ENCODE measurements at regions of chr9 and their contacts with region 1.

Region 1: GRCh38 chr9:126704873-126705766 is 91.4 kb downstream of the LMX1B start:
- DNase-seq: no peak
- ATAC-seq: peak; percentile 85
- H3K4me3 ChIP-seq: no peak overlapping the region
- H3K27ac ChIP-seq: no peak overlapping the region
- H3K4me1 ChIP-seq: no peaks in the 10 kb centered on the region
- H3K27me3 ChIP-seq: peaks cover 0 to 2% of the 10 kb centered on the region in 2 experiments; a peak in 2 of 4 replicates
- CTCF ChIP-seq: peak; percentile 82 to 91 (median 87)
- EP300 ChIP-seq: no peak
- POLR2A ChIP-seq: no peak
- RAD21 ChIP-seq: peak; percentile 81

Region 2: GRCh38 chr9:126599047-126599650 is 106.0 kb before region 1 on chr9:
- CTCF ChIA-PET with region 1: no interaction called
- POLR2A ChIA-PET with region 1: no interaction called
- RAD21 ChIA-PET with region 1: no interaction called
- SMC1A ChIA-PET with region 1: no interaction called
- in situ Hi-C with region 1: no loop called
- intact Hi-C with region 1: no loop called
- DNase-seq: no peak
- ATAC-seq: no peak
- H3K4me3 ChIP-seq: no peak overlapping the region
- H3K27ac ChIP-seq: no peak overlapping the region
- H3K4me1 ChIP-seq: no peaks in the 10 kb centered on the region
- H3K27me3 ChIP-seq: no peaks in the 10 kb centered on the region; a peak in 1 of 4 replicates
- CTCF ChIP-seq: no peak
- EP300 ChIP-seq: no peak
- POLR2A ChIP-seq: no peak
- RAD21 ChIP-seq: no peak

Region 3: GRCh38 chr9:126719618-126720031 is 14.5 kb after region 1 on chr9:
- CTCF ChIA-PET with region 1: interaction called, 41 read pairs
- POLR2A ChIA-PET with region 1: interaction called, 3 read pairs
- RAD21 ChIA-PET with region 1: interaction called, 24 read pairs
- SMC1A ChIA-PET with region 1: interaction called, 8 read pairs
- in situ Hi-C with region 1: no loop called
- intact Hi-C with region 1: no loop called
- DNase-seq: peak; percentile 53
- ATAC-seq: peak; percentile 44
- H3K4me3 ChIP-seq: no peak overlapping the region
- H3K27ac ChIP-seq: no peak overlapping the region; the same call in 1 of the 2 replicates
- H3K4me1 ChIP-seq: peaks cover 17% of the 10 kb centered on the region
- H3K27me3 ChIP-seq: no peaks in the 10 kb centered on the region
- CTCF ChIP-seq: no peak
- EP300 ChIP-seq: no peak
- POLR2A ChIP-seq: 0 out of 2 replicates have a peak, but pooled peaks have one; percentile 22
- RAD21 ChIP-seq: no peak

Region 4: DNA sequence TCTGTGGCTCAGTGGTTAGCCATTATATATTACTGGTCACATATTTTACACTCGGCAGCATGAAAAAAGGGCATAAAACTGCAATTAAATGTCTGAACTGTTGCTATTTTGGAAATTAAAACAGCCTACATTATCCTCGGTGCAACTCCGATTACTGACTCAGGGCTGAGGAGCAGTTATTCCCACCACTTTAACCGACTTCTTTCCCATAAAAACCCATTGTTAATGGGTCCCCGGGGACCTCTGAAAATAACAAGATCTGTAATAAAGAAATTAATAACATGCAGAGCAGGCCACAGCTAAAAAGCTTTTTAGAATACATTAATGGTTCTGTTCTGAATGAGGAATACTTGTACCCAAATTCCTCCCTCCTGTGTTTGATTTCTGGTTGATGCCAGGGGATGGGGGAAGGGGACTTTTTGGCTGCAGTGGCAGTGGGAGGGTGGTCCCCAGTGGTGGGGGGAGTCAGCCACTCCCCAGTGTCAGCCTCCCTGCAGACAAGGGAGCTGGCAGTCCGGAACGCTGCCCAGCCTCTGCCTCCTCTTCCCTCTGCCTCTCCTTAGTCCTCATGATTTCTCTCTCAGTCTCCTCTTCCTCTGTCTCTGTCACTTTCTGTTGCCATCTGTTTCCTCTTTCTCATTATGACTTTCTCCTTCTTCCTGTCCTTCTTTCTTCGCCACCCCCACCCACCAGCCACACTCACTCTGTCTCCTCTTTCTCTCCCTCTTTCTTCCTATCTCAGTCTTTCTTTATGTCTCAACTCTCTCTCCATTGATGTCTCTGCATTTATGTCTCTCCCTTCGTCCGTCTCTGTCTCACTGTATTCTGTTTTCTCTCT is 40.7 kb after region 1 on chr9:
- CTCF ChIA-PET with region 1: interaction called, 14 read pairs
- POLR2A ChIA-PET with region 1: no interaction called
- RAD21 ChIA-PET with region 1: interaction called, 9 read pairs
- SMC1A ChIA-PET with region 1: interaction called, 3 read pairs
- in situ Hi-C with region 1: no loop called
- intact Hi-C with region 1: no loop called
- DNase-seq: no peak
- ATAC-seq: peak; percentile 50
- H3K4me3 ChIP-seq: no peak overlapping the region
- H3K27ac ChIP-seq: no peak overlapping the region
- H3K4me1 ChIP-seq: peaks cover 2% of the 10 kb centered on the region; the same call in 1 of the 2 replicates
- H3K27me3 ChIP-seq: no peaks in the 10 kb centered on the region
- CTCF ChIP-seq: no peak
- EP300 ChIP-seq: no peak
- POLR2A ChIP-seq: no peak
- RAD21 ChIP-seq: no peak

Region 5: GRCh38 chr9:126773004-126773607 is 68.0 kb after region 1 on chr9:
- CTCF ChIA-PET with region 1: interaction called, 445 read pairs
- POLR2A ChIA-PET with region 1: interaction called, 3 read pairs
- RAD21 ChIA-PET with region 1: interaction called, 150 read pairs
- SMC1A ChIA-PET with region 1: interaction called, 111 read pairs
- in situ Hi-C with region 1: no loop called
- intact Hi-C with region 1: no loop called
- DNase-seq: no peak
- ATAC-seq: peak; percentile 53
- H3K4me3 ChIP-seq: no peak overlapping the region
- H3K27ac ChIP-seq: no peak overlapping the region
- H3K4me1 ChIP-seq: no peaks in the 10 kb centered on the region
- H3K27me3 ChIP-seq: no peaks in the 10 kb centered on the region; a peak in 1 of 4 replicates
- CTCF ChIP-seq: peak; percentile 40 to 48 (median 41)
- EP300 ChIP-seq: no peak
- POLR2A ChIP-seq: no peak
- RAD21 ChIP-seq: peak; percentile 34

Region 6: DNA sequence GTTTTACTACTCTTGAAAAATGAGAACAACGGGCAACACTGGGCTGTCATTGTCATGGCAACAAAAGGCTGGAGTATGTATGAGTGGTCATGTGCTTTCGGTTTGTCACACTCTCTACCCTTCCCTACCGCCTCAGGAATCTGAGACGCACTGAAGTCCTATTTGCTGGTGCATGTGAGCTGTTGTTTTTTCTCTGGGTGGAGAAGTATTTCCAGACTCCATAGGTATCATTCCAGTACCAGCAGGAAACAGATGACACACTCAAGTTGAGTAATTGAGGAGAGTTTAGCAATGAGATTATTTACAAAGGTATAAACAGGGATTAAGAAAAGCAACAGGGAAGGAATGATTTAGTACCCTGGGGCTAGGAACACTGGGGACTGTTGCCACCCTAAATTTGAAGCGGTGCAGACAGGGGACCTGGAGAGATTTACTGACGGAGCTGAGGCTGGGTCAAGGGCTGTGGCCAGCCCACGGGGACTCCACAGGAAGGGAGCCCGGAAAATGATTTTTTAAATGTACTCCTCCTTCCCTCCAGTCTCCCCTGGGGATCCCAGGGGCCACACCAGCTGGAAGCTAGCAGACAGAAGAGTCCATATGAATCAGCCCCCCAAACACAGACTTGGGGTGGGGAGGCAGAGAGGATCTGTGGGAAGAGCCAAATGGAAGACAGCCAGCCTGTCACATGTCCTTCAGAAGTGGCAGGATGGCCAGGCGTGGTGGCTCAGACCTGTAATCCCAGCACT is 86.5 kb after region 1 on chr9:
- CTCF ChIA-PET with region 1: interaction called, 445 read pairs
- POLR2A ChIA-PET with region 1: no interaction called
- RAD21 ChIA-PET with region 1: interaction called, 3 read pairs
- SMC1A ChIA-PET with region 1: interaction called, 4 read pairs
- in situ Hi-C with region 1: no loop called
- intact Hi-C with region 1: no loop called
- DNase-seq: no peak
- ATAC-seq: peak; percentile 51
- H3K4me3 ChIP-seq: no peak overlapping the region
- H3K27ac ChIP-seq: no peak overlapping the region
- H3K4me1 ChIP-seq: no peaks in the 10 kb centered on the region
- H3K27me3 ChIP-seq: peaks cover 1 to 2% of the 10 kb centered on the region in 2 experiments; a peak in 1 of 4 replicates
- CTCF ChIP-seq: no peak
- EP300 ChIP-seq: no peak
- POLR2A ChIP-seq: no peak
- RAD21 ChIP-seq: no peak

Measured in GM12878 (cell line).